ENCODE measurements at regions of chr5 and their contacts with region 1.

Region 1: GRCh38 chr5:179176571-179177230 is 116.5 kb downstream of the ZNF354C start:
- DNase-seq: no peak
- ATAC-seq: no peak
- H3K4me3 ChIP-seq: no peak overlapping the region
- H3K27ac ChIP-seq: no peak overlapping the region
- H3K4me1 ChIP-seq: no peaks in the 10 kb centered on the region
- H3K27me3 ChIP-seq: no peaks in the 10 kb centered on the region
- CTCF ChIP-seq: no peak
- POLR2A ChIP-seq: no peak

Region 2: DNA sequence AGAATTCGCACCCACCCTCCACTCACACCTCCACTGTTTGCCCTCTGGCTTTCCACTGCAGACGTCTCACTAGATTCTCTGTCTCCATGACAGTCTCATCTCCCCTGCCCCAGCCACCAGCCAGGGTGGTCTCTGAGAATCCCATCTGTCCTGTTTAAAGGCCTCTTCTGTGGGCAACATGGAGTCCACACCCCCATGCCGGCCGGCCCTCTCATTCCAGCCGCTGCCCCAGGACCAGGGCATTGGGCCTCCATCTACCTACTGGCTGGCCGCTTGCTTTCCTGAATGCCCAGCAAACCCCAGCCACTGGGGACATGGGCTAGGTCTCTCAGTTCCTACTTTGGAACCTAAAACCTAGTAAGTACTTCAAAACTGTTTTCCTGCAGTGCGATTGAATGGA is 308.1 kb after region 1 on chr5:
- intact Hi-C with region 1: loop called in 1 of 2 experiments (anchors 5 kb)
- DNase-seq: no peak
- ATAC-seq: no peak
- H3K4me3 ChIP-seq: no peak overlapping the region
- H3K27ac ChIP-seq: no peak overlapping the region
- H3K4me1 ChIP-seq: no peaks in the 10 kb centered on the region
- H3K27me3 ChIP-seq: no peaks in the 10 kb centered on the region
- CTCF ChIP-seq: no peak
- POLR2A ChIP-seq: no peak